ENCODE measurements at regions of chrX and their contacts with region 1.

Region 1: DNA sequence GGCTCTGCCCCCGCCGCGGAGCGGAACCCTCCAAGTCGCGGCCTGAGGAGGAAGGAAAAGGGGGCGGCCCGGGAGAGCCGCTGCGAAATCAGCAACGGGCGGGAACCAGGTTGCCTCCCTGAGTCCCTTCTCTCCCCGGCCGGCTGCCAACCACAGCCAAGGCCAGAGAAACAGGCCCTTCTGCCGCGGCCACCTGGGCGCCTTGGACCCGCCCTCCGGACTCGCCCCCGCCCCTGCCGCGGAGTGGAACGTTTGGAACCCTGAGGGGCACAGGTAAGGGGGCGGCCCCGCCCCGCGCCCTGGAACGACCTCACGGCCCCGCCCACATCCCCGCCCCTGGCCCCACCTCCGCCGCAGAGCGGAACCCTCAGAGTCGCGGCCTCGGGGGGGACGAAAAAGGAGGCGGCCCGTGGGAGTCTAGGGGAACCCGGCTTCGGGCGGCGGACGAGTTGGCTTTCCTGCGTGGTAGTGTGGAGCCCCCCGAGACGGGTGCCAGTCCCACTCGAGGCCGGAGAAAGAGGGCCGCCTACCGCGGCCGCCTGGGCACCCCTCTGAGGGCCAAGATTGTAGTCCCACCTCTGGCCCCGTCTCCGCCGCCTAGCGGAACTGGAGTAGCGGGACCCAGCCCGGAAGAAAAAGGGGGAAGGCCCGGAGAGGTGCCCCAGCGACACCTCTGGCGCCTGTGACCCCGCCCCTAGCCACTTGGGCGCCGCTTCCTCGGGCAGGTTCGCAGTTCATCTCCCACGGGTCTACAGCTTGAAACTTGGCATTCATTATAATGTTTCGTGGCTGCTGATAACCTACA is 669 bp upstream of the PHKA2 start:
- DNase-seq: no peak
- H3K4me3 ChIP-seq: peak overlapping the region; percentile 68
- H3K27ac ChIP-seq: peak overlapping the region; percentile 68
- H3K27me3 ChIP-seq: no peaks in the 10 kb centered on the region
- CTCF ChIP-seq: peak; percentile 54

Region 2: GRCh38 chrX:18994738-18995137 is 10.2 kb after region 1 on chrX:
- CTCF ChIA-PET with region 1: interaction called, 13 read pairs
- POLR2A ChIA-PET with region 1: interaction called, 11 read pairs
- DNase-seq: peak; percentile 67
- H3K4me3 ChIP-seq: no peak overlapping the region; the same call in 1 of the 2 replicates
- H3K27ac ChIP-seq: peak overlapping the region; percentile 53
- H3K27me3 ChIP-seq: no peaks in the 10 kb centered on the region
- CTCF ChIP-seq: no peak

Measured in AG04450 (cell line).